B cell (primary cell): ENCODE measurements at regions of chr4 and their contacts with region 1.

Region 1: GRCh38 chr4:184825896-184826690 is at the start of gene ACSL1:
- DNase-seq: peak; percentile 89
- ATAC-seq: peak; percentile 80
- H3K4me3 ChIP-seq: peak within 1 kb of the TSS; percentile 58 to 94 (median 76)
- H3K4me3 Mint-ChIP-seq: peak within 1 kb of the TSS; percentile 98
- H3K27ac ChIP-seq: peak within 1 kb of the TSS; percentile 48 to 93
- H3K27ac Mint-ChIP-seq: peak within 1 kb of the TSS; percentile 96
- H3K4me1 ChIP-seq: peaks cover 23 to 26% of the 10 kb centered on the region in 2 donors
- H3K4me1 Mint-ChIP-seq: peaks cover 46% of the 10 kb centered on the region
- H3K27me3 ChIP-seq: no peaks in the 10 kb centered on the region
- H3K27me3 Mint-ChIP-seq: no peaks in the 10 kb centered on the region
- CTCF ChIP-seq: no peak
- total RNA-seq, gene ACSL1: 31.8 and 32.2 TPM in 2 replicates

Region 2: DNA sequence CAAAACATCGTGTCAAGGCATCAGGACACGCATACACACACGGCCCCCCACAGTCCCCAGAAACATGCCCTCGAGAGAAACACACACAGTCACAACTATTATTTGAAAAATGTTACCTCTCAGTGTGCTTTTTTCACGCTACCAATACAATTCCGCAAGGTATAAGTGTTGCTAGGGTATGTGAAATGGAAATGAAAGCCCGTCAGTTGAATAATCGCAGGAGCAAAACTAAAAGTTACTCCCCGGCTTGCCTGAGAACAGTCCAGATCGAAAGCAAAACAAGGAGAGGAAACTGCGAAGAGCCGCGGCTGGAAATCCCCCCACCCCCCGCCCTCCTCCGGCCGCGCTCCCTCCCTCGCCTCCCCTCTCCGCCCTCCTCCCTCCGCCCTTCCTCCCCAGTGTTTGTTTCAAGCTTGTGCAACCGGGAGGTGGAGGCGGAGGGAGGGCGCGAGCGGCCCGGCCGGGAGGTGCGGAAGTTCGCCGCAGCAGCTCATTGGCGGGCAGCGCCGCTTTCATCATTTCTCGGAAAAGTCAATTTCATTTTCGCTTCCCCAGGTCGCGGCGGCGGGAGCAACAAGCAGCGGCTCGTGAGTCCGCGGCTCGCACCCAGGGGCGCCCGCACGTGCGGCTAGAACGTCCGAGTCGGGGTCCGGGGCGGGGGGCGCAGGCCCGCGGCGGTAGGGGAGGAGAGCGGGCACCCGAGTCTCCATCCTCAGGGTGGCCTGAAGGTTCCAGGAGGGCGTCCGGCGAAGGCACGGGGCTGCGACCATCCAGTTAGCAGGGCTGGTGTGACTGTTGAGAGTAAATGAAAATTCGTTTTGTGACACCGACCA is 351.6 kb before region 1 on chr4 and contains the start of gene IRF2:
- CTCF ChIA-PET with region 1: no interaction called
- POLR2A ChIA-PET with region 1: no interaction called
- intact Hi-C with region 1: loop called (anchors 10 kb)
- DNase-seq: peak; percentile 98
- ATAC-seq: peak; percentile 82
- H3K4me3 ChIP-seq: peak within 1 kb of the TSS; percentile 92 to 100 (median 97)
- H3K4me3 Mint-ChIP-seq: peak within 1 kb of the TSS; percentile 96
- H3K27ac ChIP-seq: peak within 1 kb of the TSS; percentile 91 to 96
- H3K27ac Mint-ChIP-seq: peak within 1 kb of the TSS; percentile 95
- H3K4me1 ChIP-seq: peaks cover 53 to 54% of the 10 kb centered on the region in 2 donors
- H3K4me1 Mint-ChIP-seq: peaks cover 66% of the 10 kb centered on the region
- H3K27me3 ChIP-seq: no peaks in the 10 kb centered on the region
- H3K27me3 Mint-ChIP-seq: no peaks in the 10 kb centered on the region
- CTCF ChIP-seq: no peak
- total RNA-seq, gene IRF2: 68.2 and 68.4 TPM in 2 replicates

Region 3: DNA sequence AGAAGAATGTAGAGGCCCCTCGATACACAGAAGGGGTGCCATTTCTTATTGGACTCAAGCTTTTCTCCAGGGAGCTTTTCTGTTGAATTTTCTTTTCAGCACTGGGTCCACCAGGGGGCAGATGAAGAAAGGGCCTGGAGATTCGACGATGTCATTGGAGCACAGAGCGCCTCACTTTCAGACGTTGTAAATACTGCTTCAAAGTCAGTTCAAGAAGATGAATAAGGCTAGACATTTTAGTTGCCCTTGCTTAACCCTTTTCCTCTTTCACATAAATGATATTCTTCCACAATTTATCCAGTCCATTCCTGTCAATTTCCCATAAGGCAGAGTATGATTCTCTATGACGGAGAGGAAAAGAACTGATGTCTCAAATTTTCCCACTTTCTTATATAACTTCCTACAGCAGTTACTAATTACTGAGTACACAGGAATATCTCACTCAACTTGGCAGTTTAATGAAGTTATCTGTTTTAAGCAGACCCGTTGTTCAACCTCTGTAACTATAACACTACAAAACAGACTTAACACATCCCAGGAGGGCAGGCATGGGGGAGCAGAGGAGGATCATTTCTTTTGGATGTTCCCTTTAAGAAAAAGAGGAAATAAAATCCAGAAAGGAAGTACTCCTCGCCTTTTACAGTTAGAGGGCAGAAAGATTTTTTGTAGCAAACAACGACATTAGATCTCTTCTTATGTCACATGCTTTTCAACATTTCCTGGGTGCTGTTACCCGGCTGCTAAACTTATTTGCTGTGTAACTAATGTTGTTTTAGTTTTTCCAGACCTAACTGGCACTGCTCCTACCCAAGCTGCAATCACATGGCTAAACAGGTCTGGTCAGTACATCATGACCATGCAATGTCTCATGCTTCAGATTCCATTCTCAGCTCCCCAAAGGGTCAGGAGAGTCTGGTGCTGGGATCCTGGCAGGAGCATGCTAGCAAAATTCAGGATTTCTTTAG is 80.0 kb before region 1 on chr4:
- CTCF ChIA-PET with region 1: interaction called, 9 read pairs
- POLR2A ChIA-PET with region 1: no interaction called
- intact Hi-C with region 1: loop called (anchors 5 kb)
- DNase-seq: peak; percentile 79
- ATAC-seq: peak; percentile 90
- H3K4me3 ChIP-seq: no peak overlapping the region
- H3K4me3 Mint-ChIP-seq: peak overlapping the region; percentile 55
- H3K27ac ChIP-seq: no peak overlapping the region
- H3K27ac Mint-ChIP-seq: peak overlapping the region; percentile 53
- H3K4me1 ChIP-seq: peaks cover 8 to 12% of the 10 kb centered on the region in 2 donors
- H3K4me1 Mint-ChIP-seq: peaks cover 11% of the 10 kb centered on the region
- H3K27me3 ChIP-seq: no peaks in the 10 kb centered on the region
- H3K27me3 Mint-ChIP-seq: no peaks in the 10 kb centered on the region
- CTCF ChIP-seq: peak; percentile 82

Region 4: GRCh38 chr4:184851200-184851541 is 25.1 kb after region 1 on chr4:
- CTCF ChIA-PET with region 1: interaction called, 4 read pairs
- POLR2A ChIA-PET with region 1: interaction called, 15 read pairs
- intact Hi-C with region 1: loop called (anchors 1 kb)
- DNase-seq: peak; percentile 73
- ATAC-seq: peak; percentile 84
- H3K4me3 ChIP-seq: peak overlapping the region in 1 of 5 experiments; percentile 1
- H3K4me3 Mint-ChIP-seq: no peak overlapping the region
- H3K27ac ChIP-seq: peak overlapping the region in 1 of 2 donors; percentile 25
- H3K27ac Mint-ChIP-seq: no peak overlapping the region
- H3K4me1 ChIP-seq: peaks cover 32 to 52% of the 10 kb centered on the region in 2 donors
- H3K4me1 Mint-ChIP-seq: peaks cover 35% of the 10 kb centered on the region
- H3K27me3 ChIP-seq: no peaks in the 10 kb centered on the region
- H3K27me3 Mint-ChIP-seq: no peaks in the 10 kb centered on the region
- CTCF ChIP-seq: no peak

Region 5: GRCh38 chr4:185142912-185143595 is 317.0 kb after region 1 on chr4 and contains the start of gene SLC25A4:
- CTCF ChIA-PET with region 1: no interaction called
- POLR2A ChIA-PET with region 1: no interaction called
- intact Hi-C with region 1: loop called (anchors 10 kb)
- DNase-seq: peak; percentile 94
- ATAC-seq: peak; percentile 98
- H3K4me3 ChIP-seq: peak within 1 kb of the TSS; percentile 55 to 83 (median 81)
- H3K4me3 Mint-ChIP-seq: peak within 1 kb of the TSS; percentile 97
- H3K27ac ChIP-seq: peak within 1 kb of the TSS; percentile 66 to 76
- H3K27ac Mint-ChIP-seq: peak within 1 kb of the TSS; percentile 90
- H3K4me1 ChIP-seq: peaks cover 13% of the 10 kb centered on the region in 2 donors
- H3K4me1 Mint-ChIP-seq: peaks cover 15% of the 10 kb centered on the region
- H3K27me3 ChIP-seq: peaks cover 0 to 4% (median 0%) of the 10 kb centered on the region in 4 experiments
- H3K27me3 Mint-ChIP-seq: peaks cover 8% of the 10 kb centered on the region
- CTCF ChIP-seq: peak; percentile 76
- total RNA-seq, gene SLC25A4: 7.3 and 8.2 TPM in 2 replicates

Region 6: GRCh38 chr4:185395956-185396723 is 570.0 kb after region 1 on chr4:
- CTCF ChIA-PET with region 1: no interaction called
- POLR2A ChIA-PET with region 1: no interaction called
- intact Hi-C with region 1: loop called (anchors 5 kb)
- DNase-seq: peak; percentile 97
- ATAC-seq: peak; percentile 87
- H3K4me3 ChIP-seq: peak overlapping the region; percentile 79 to 98 (median 89)
- H3K4me3 Mint-ChIP-seq: peak overlapping the region; percentile 92
- H3K27ac ChIP-seq: peak overlapping the region; percentile 97 to 99
- H3K27ac Mint-ChIP-seq: peak overlapping the region; percentile 94
- H3K4me1 ChIP-seq: peaks cover 26% of the 10 kb centered on the region in 2 donors
- H3K4me1 Mint-ChIP-seq: peaks cover 54% of the 10 kb centered on the region
- H3K27me3 ChIP-seq: no peaks in the 10 kb centered on the region
- H3K27me3 Mint-ChIP-seq: no peaks in the 10 kb centered on the region
- CTCF ChIP-seq: no peak